PC-9 (cell line): ENCODE measurements at regions of chr5 and their contacts with region 1.

Region 1: DNA sequence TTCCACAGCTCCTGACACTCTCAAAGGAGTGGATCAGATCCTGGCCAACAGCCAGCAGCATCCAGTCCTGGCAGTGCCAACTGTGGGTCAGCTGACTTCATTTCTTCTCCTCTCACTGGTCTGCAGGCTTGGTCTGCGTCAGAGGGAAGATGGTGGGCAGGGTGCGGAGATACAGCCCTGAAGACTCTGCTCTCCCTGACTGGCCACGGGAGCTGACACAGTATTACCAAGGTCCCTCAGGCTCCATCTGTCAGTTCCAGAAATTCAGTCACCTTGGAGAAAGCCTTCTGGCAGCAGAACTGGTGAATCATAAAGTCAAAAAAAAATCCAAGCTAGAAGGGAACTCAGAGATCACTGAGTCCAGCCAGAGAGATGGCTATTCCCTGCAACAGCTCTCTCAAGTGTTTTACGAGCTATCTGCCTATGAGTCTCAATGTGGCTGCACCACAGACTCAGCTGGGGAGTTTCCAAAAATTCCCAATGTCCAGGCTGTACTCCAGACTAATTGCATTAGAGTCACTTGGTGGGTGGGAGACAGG is 28.0 kb downstream of the C1QTNF2 start:
- DNase-seq: peak; percentile 31 to 41
- H3K4me3 ChIP-seq: no peak overlapping the region
- H3K27ac ChIP-seq: no peak overlapping the region
- H3K4me1 ChIP-seq: 0 out of 2 replicates have a peak, but pooled peaks cover 6% of the 10 kb centered on the region
- H3K27me3 ChIP-seq: no peaks in the 10 kb centered on the region
- CTCF ChIP-seq: no peak

Region 2: DNA sequence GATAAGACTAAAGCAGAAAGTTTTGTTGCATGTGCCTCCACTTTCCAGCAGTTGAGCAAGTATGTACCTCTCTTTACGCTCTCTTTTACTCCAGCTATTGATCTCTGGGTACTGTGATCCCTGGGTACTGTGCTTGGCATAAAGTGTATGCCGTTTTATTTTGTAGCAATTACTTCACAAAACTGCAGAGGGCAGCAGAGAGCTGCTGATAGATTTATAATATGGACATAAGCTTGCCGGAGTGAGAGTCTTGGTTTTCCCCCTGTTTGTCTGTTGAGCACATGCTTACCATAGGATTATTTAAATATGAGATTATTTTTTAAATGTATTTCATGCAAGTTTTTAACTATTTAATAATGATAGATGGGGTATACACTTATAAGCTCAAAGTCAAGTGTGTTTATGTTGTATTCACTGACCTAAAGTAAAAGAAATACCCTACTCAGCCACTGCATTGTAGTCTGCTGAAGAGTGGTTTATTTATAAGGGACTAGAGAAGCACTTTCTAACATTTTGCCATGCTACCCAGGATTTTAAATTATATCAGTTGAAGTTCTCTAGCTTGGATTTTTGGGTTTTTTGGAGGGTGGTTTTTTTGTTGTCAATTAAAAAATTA is 320.5 kb before region 1 on chr5:
- CTCF ChIA-PET with region 1: interaction called, 7 read pairs
- POLR2A ChIA-PET with region 1: interaction called, 4 read pairs
- intact Hi-C with region 1: loop called (anchors 1 kb)
- DNase-seq: peak; percentile 40 to 56
- H3K4me3 ChIP-seq: no peak overlapping the region
- H3K27ac ChIP-seq: no peak overlapping the region
- H3K4me1 ChIP-seq: no peaks in the 10 kb centered on the region
- H3K27me3 ChIP-seq: no peaks in the 10 kb centered on the region
- CTCF ChIP-seq: peak; percentile 90

Region 3: GRCh38 chr5:160060001-160060400 is 282.5 kb before region 1 on chr5:
- CTCF ChIA-PET with region 1: no interaction called
- POLR2A ChIA-PET with region 1: no interaction called
- intact Hi-C with region 1: no loop called
- DNase-seq: no peak
- H3K4me3 ChIP-seq: no peak overlapping the region
- H3K27ac ChIP-seq: no peak overlapping the region
- H3K4me1 ChIP-seq: peaks cover 6% of the 10 kb centered on the region
- H3K27me3 ChIP-seq: no peaks in the 10 kb centered on the region
- CTCF ChIP-seq: no peak

Region 4: GRCh38 chr5:160119142-160119904 is 223.1 kb before region 1 on chr5 and contains the start of gene PWWP2A:
- CTCF ChIA-PET with region 1: no interaction called
- POLR2A ChIA-PET with region 1: no interaction called
- intact Hi-C with region 1: loop called (anchors 1 kb)
- DNase-seq: peak; percentile 98 to 100
- H3K4me3 ChIP-seq: peak within 1 kb of the TSS; percentile 94
- H3K27ac ChIP-seq: peak within 1 kb of the TSS; percentile 37; the same call in 1 of the 2 replicates
- H3K4me1 ChIP-seq: peaks cover 14% of the 10 kb centered on the region
- H3K27me3 ChIP-seq: no peaks in the 10 kb centered on the region
- CTCF ChIP-seq: no peak
- total RNA-seq, gene PWWP2A: 19.9 and 23.2 TPM in 2 replicates

Region 5: GRCh38 chr5:160245506-160246086 is 96.9 kb before region 1 on chr5:
- CTCF ChIA-PET with region 1: interaction called, 6 read pairs
- POLR2A ChIA-PET with region 1: interaction called, 3 read pairs
- intact Hi-C with region 1: loop called (anchors 1 kb)
- DNase-seq: no peak
- H3K4me3 ChIP-seq: no peak overlapping the region
- H3K27ac ChIP-seq: no peak overlapping the region
- H3K4me1 ChIP-seq: no peaks in the 10 kb centered on the region
- H3K27me3 ChIP-seq: no peaks in the 10 kb centered on the region
- CTCF ChIP-seq: no peak

Region 6: DNA sequence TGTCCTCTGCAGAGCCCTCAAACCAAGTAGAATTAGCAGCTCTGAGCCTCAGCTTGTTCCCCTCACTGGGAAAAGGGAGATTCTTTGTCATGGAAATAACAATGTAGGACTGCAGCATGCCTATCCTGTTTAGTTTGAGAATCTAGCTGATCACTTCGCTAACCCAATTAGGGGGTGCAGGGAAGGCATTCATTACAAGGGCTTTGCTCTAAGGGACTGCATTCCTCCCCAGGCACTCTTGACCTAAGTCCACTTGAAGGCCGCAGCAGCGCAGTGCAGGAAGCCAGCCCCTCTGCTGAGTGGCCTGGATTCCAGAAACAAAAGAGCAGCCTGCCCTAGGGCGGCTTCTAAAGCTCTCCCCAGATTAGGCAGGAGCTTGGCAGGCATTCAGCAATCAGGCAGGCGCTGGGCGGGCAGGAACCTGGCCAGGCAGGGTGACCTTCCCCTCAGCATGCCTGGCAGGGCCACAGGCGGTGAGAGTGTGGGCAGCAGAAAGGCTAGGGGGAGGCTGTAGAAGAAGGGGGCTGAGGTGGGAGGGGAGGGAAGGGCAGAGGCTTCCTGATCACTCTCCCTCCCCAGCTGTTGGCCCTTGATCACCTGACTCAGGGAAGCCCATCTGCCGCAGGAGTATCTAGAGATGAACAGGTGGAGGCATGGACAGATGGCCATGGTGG is 55.0 kb before region 1 on chr5:
- CTCF ChIA-PET with region 1: interaction called, 3 read pairs
- POLR2A ChIA-PET with region 1: no interaction called
- intact Hi-C with region 1: loop called (anchors 1 kb)
- DNase-seq: peak; percentile 84 to 94
- H3K4me3 ChIP-seq: no peak overlapping the region
- H3K27ac ChIP-seq: peak overlapping the region; percentile 38
- H3K4me1 ChIP-seq: peaks cover 28% of the 10 kb centered on the region
- H3K27me3 ChIP-seq: no peaks in the 10 kb centered on the region
- CTCF ChIP-seq: no peak

Region 7: GRCh38 chr5:160312134-160312959 is 30.1 kb before region 1 on chr5 and contains the start of gene CCNJL:
- CTCF ChIA-PET with region 1: interaction called, 3 read pairs
- POLR2A ChIA-PET with region 1: interaction called, 9 read pairs
- intact Hi-C with region 1: loop called (anchors 1 kb)
- DNase-seq: peak; percentile 47 to 91
- H3K4me3 ChIP-seq: peak within 1 kb of the TSS; percentile 78
- H3K27ac ChIP-seq: peak within 1 kb of the TSS; percentile 60
- H3K4me1 ChIP-seq: peaks cover 46% of the 10 kb centered on the region
- H3K27me3 ChIP-seq: no peaks in the 10 kb centered on the region
- CTCF ChIP-seq: no peak
- total RNA-seq, gene CCNJL: 33.9 and 34.7 TPM in 2 replicates

Region 8: GRCh38 chr5:160950311-160950710 is 607.8 kb after region 1 on chr5:
- CTCF ChIA-PET with region 1: no interaction called
- POLR2A ChIA-PET with region 1: no interaction called
- intact Hi-C with region 1: no loop called
- DNase-seq: no peak
- H3K4me3 ChIP-seq: no peak overlapping the region
- H3K27ac ChIP-seq: no peak overlapping the region
- H3K4me1 ChIP-seq: no peaks in the 10 kb centered on the region
- H3K27me3 ChIP-seq: no peaks in the 10 kb centered on the region; the same call in 1 of the 2 replicates
- CTCF ChIP-seq: no peak

Region 9: GRCh38 chr5:162256711-162257110 is 1914.2 kb after region 1 on chr5:
- CTCF ChIA-PET with region 1: no interaction called
- POLR2A ChIA-PET with region 1: no interaction called
- intact Hi-C with region 1: no loop called
- DNase-seq: no peak
- H3K4me3 ChIP-seq: no peak overlapping the region
- H3K27ac ChIP-seq: no peak overlapping the region
- H3K4me1 ChIP-seq: no peaks in the 10 kb centered on the region
- H3K27me3 ChIP-seq: no peaks in the 10 kb centered on the region
- CTCF ChIP-seq: no peak